Activated CD8-positive, alpha-beta T cell treated with anti-CD3 and anti-CD28 coated beads, Interleukin-2, amount 10 ng/mL, durations not matched to agents 7 days and 5 days (primary cell): ENCODE measurements at regions of chr6 and their contacts with region 1.

Region 1: GRCh38 chr6:24547243-24547642 is 52.5 kb downstream of the ALDH5A1 start:
- DNase-seq: peak; percentile 69
- ATAC-seq: peak; percentile 90
- H3K4me3 Mint-ChIP-seq: no peak overlapping the region
- H3K27ac Mint-ChIP-seq: no peak overlapping the region
- H3K4me1 Mint-ChIP-seq: peaks cover 9% of the 10 kb centered on the region
- H3K27me3 Mint-ChIP-seq: peaks cover 23% of the 10 kb centered on the region

Region 2: GRCh38 chr6:24537082-24537699 is 10.1 kb before region 1 on chr6:
- CTCF ChIA-PET with region 1: interaction called, 12 read pairs
- POLR2A ChIA-PET with region 1: no interaction called
- DNase-seq: no peak
- ATAC-seq: no peak
- H3K4me3 Mint-ChIP-seq: no peak overlapping the region
- H3K27ac Mint-ChIP-seq: no peak overlapping the region
- H3K4me1 Mint-ChIP-seq: no peaks in the 10 kb centered on the region
- H3K27me3 Mint-ChIP-seq: no peaks in the 10 kb centered on the region

Region 3: GRCh38 chr6:24692848-24693592 is 145.8 kb after region 1 on chr6:
- CTCF ChIA-PET with region 1: interaction called, 10 read pairs
- POLR2A ChIA-PET with region 1: no interaction called
- DNase-seq: peak; percentile 35
- ATAC-seq: peak; percentile 64
- H3K4me3 Mint-ChIP-seq: no peak overlapping the region
- H3K27ac Mint-ChIP-seq: peak overlapping the region; percentile 22
- H3K4me1 Mint-ChIP-seq: peaks cover 11% of the 10 kb centered on the region
- H3K27me3 Mint-ChIP-seq: no peaks in the 10 kb centered on the region